AG04449 (cell line): ENCODE measurements at regions of chr5 and their contacts with region 1.

Region 1: DNA sequence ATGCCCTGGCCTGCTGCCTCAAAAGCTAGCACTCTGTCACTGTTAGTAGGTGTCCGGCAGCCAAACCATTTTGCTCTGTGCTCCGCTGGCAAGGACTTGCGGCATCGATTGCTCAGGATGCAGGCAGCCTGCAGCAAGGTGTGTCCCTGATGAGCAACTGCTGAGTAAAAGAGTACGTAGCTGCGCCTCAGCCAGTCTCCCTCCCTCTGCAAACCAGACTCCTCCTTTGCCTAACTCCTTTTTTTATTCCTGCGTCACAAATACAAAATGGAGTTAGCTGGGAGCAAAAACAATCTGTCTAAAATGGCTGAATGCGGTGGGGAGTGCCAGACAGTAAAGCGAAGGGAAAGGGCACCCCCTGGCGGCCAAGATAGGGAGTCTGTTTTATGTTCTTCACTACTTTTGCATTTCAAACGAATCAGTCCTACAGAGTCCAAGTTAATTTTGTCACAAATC is 61.1 kb downstream of the DIAPH1 start:
- DNase-seq: peak; percentile 98
- H3K4me3 ChIP-seq: peak overlapping the region; percentile 32
- CTCF ChIP-seq: peak; percentile 72

Region 2: DNA sequence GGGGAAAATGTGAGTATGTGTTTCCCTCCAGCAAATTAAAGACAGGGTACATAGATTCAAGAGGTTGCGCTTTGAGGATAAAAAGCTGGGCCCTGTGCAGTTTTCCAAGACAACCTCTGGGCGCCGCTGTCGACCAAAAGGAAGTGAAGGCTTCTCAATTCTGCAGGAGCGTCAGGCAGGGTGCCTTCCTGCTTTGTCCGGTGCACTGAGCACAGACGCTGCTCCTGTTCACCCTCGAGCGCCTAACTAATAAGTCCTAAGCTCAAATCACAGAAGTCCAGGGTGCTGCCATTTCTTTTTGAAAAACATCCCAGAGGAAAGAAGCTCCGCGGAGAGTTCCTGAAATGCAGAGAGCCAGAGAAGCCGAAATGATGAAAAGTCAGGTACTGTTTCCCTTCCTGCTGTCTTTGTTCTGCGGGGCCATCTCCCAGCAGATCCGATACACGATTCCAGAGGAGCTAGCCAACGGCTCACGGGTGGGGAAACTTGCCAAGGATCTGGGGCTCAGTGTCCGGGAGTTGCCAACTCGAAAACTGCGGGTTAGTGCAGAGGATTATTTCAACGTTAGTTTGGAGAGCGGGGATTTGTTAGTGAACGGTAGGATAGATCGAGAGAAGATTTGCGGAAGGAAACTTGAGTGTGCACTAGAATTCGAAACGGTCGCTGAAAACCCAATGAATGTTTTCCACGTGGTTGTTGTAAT is 207.6 kb before region 1 on chr5 and contains the start of gene PCDHGB1:
- CTCF ChIA-PET with region 1: interaction called, 134 read pairs
- POLR2A ChIA-PET with region 1: no interaction called
- DNase-seq: no peak
- H3K4me3 ChIP-seq: peak within 1 kb of the TSS; percentile 39
- CTCF ChIP-seq: peak; percentile 50

Region 3: GRCh38 chr5:141392429-141393198 is 165.1 kb before region 1 on chr5 and contains the start of gene PCDHGA8:
- CTCF ChIA-PET with region 1: interaction called, 77 read pairs
- POLR2A ChIA-PET with region 1: no interaction called
- DNase-seq: no peak
- H3K4me3 ChIP-seq: 0 out of 2 replicates have a peak within 1 kb of the TSS, but pooled peaks have one; percentile 1
- CTCF ChIP-seq: no peak

Region 4: DNA sequence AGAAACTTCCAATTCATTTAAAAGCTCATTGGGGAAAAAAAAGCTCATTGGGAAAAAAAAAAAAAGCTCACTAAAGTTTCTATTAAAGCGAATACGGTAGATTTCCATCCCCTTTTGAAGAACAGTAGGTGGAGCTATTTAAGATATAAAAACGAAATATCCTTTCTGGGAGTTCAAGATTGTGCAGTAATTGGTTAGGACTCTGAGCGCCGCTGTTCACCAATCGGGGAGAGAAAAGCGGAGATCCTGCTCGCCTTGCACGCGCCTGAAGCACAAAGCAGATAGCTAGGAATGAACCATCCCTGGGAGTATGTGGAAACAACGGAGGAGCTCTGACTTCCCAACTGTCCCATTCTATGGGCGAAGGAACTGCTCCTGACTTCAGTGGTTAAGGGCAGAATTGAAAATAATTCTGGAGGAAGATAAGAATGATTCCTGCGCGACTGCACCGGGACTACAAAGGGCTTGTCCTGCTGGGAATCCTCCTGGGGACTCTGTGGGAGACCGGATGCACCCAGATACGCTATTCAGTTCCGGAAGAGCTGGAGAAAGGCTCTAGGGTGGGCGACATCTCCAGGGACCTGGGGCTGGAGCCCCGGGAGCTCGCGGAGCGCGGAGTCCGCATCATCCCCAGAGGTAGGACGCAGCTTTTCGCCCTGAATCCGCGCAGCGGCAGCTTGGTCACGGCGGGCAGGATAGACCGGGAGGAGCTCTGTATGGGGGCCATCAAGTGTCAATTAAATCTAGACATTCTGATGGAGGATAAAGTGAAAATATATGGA is 127.2 kb before region 1 on chr5 and contains the start of gene PCDHGA12:
- CTCF ChIA-PET with region 1: interaction called, 288 read pairs
- POLR2A ChIA-PET with region 1: interaction called, 11 read pairs
- DNase-seq: peak; percentile 52
- H3K4me3 ChIP-seq: peak within 1 kb of the TSS; percentile 49
- CTCF ChIP-seq: peak; percentile 38

Region 5: DNA sequence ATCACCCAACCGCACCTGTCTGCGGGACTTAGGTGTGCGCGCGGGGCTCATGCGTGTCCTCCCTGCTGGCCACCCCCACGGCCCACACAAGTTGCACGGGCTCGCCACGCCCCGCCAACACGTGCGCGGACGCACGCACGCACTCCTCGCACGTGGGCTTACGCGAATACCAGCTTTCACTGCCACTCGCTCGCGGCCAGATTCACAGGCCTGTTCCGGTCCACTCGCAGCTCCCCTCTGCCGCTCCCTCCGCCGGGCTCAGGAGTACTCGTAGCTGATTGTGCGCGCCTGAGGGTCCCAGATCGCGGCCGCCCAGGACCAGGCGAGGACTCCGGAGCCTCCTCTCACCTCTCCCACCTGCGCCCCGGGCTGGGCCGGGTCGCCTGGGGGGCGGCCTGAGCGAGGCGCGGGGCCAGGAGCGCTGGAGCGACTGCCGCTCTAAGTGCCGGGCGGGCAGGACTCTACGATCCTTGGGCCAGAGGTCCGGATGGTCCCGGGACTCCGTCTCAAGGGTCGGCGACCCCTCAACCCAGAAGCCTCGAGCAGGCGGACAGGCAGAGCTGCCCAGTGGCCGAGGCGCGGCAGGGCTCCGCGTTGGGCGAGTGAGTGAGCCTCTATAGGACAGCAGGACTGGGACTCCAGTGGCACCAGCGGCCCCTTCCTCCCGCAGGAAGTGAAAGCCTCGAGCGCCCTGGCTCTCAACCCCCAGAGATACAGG is 65.4 kb before region 1 on chr5:
- CTCF ChIA-PET with region 1: interaction called, 18 read pairs
- POLR2A ChIA-PET with region 1: interaction called, 3 read pairs
- DNase-seq: no peak
- H3K4me3 ChIP-seq: no peak overlapping the region
- CTCF ChIP-seq: no peak

Region 6: GRCh38 chr5:141547488-141547887 is 10.2 kb before region 1 on chr5:
- CTCF ChIA-PET with region 1: interaction called, 56 read pairs
- POLR2A ChIA-PET with region 1: no interaction called
- DNase-seq: no peak
- H3K4me3 ChIP-seq: no peak overlapping the region
- CTCF ChIP-seq: no peak

Region 7: GRCh38 chr5:143182901-143183820 is 1625.5 kb after region 1 on chr5:
- CTCF ChIA-PET with region 1: no interaction called
- POLR2A ChIA-PET with region 1: no interaction called
- DNase-seq: no peak
- H3K4me3 ChIP-seq: no peak overlapping the region
- CTCF ChIP-seq: no peak